Activated B cell treated with CpG ODN at 0.5 μM for 24 hours (primary cell): ENCODE measurements at regions of chr14 and their contacts with region 1.

Region 1: DNA sequence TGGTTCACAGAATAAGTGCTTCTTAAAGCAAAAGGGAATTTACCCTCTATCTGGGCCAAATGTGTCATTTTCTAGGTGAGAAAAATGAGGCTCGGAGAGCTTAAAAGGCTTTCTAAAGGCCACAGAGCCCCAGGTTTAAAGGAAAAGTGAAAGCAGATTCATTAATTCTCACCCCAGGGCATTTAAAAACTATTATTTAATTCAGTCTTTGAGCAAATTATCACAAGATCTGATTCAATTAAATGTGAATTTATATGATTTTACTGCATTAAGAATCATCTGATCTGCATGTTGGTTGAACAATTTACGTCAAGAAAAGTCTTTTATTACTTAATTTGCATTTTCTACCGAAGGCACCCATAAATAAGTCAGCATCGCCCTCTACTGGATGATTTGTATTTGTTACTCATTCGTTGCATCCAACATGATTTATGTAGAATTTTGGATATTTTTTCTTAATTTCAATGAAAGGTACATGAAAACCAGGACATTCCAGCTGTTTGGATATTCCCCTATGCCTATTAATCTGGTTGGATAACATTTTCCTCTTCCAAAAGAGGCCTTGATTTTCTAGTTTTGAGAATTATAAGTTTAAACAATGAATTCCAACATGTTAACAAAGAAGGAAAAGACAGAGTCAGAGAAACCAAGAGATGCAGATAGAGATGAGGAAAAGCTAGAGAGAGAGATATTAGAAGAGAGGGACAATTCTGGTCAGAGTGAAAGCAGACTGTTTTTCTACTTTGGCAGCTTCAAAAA is 19.1 kb upstream of the DHRS7 start:
- DNase-seq: no peak
- ATAC-seq: peak; percentile 56
- H3K4me3 Mint-ChIP-seq: peak overlapping the region; percentile 82
- H3K27ac Mint-ChIP-seq: peak overlapping the region; percentile 87
- H3K4me1 Mint-ChIP-seq: peaks cover 17% of the 10 kb centered on the region
- H3K27me3 Mint-ChIP-seq: no peaks in the 10 kb centered on the region
- CTCF ChIP-seq: peak; percentile 89

Region 2: DNA sequence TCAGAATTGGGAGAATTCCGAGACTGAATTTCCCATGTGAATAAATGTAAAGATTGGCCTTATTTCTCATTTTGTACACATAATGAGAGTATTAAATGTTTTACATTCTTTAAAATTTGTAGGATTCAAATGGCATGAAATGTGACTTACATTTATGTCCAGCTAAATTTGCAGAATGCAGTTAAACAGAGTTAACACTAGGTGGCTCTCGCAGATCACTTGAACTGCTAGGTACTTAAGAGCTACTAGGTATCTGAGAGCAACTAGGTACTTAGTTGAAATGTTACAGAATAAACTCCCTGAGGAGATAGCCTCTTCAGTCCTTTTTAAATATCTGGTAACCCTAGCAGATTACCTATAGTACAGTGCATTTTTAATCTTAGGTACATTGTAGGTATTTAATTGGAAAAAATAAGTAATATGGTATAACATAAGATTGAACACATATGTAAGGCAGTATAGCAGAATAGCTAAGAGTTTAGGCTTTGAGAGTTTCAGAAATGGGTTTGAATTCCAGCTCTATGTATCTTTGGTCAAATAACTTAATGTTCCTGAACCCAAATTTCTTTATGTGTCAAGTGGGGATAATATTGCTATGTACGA is 1683.0 kb before region 1 on chr14:
- CTCF ChIA-PET with region 1: no interaction called
- POLR2A ChIA-PET with region 1: no interaction called
- intact Hi-C with region 1: loop called (anchors 10 kb)
- DNase-seq: no peak
- ATAC-seq: peak; percentile 71
- H3K4me3 Mint-ChIP-seq: no peak overlapping the region
- H3K27ac Mint-ChIP-seq: no peak overlapping the region
- H3K4me1 Mint-ChIP-seq: no peaks in the 10 kb centered on the region
- H3K27me3 Mint-ChIP-seq: no peaks in the 10 kb centered on the region
- CTCF ChIP-seq: no peak

Region 3: GRCh38 chr14:59507063-59507780 is 677.1 kb before region 1 on chr14:
- CTCF ChIA-PET with region 1: interaction called, 7 read pairs
- POLR2A ChIA-PET with region 1: no interaction called
- intact Hi-C with region 1: loop called (anchors 1 kb)
- DNase-seq: no peak
- ATAC-seq: peak; percentile 70
- H3K4me3 Mint-ChIP-seq: no peak overlapping the region
- H3K27ac Mint-ChIP-seq: no peak overlapping the region
- H3K4me1 Mint-ChIP-seq: no peaks in the 10 kb centered on the region
- H3K27me3 Mint-ChIP-seq: peaks cover 3% of the 10 kb centered on the region
- CTCF ChIP-seq: no peak

Region 4: GRCh38 chr14:59964251-59965007 is 219.9 kb before region 1 on chr14:
- CTCF ChIA-PET with region 1: interaction called, 171 read pairs
- POLR2A ChIA-PET with region 1: no interaction called
- intact Hi-C with region 1: loop called (anchors 1 kb)
- DNase-seq: no peak
- ATAC-seq: peak; percentile 25
- H3K4me3 Mint-ChIP-seq: peak overlapping the region; percentile 86
- H3K27ac Mint-ChIP-seq: peak overlapping the region; percentile 93
- H3K4me1 Mint-ChIP-seq: peaks cover 14% of the 10 kb centered on the region
- H3K27me3 Mint-ChIP-seq: no peaks in the 10 kb centered on the region
- CTCF ChIP-seq: no peak

Region 5: DNA sequence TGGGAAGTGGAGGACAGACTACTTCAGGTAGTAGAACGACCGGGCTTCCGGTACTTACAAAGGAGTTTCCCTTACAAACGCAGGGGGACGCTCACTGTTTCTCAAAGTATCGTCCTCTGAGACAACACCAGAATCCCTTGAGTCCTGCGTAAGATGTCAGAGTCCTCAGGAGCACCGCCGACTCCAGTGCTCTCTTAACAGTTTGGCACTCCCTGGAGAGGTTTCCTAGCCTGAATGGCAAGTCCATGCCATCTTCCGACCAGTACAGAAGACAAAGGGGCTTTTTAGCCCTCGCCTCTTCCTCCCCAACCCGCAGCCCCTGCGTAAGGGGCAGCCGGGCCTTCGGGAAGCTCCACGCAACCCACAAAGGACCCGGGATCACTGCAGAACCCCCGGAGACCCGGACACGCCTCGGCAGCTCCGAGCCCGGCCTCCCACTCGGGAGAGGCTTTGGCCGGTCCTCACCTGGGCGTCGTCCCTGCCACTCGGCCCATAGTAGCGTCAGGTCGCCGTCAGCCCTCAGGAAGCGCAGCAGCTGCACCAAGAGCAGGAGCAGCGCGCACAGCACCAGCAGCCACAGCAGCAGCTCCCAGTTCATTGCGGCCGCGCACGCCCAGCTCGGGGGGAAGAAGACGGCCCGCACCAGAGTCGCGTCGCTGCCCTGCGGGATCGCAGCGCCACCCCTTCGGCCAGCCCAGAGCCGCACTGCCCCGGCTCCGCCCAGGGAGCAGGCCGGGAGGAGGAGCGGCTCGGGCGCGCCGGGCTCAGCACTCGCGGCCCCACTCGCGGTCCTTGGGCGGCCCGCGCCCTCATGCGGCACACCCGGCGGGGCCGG is 19.4 kb before region 1 on chr14 and contains the start of gene DHRS7:
- CTCF ChIA-PET with region 1: interaction called, 28 read pairs
- POLR2A ChIA-PET with region 1: interaction called, 22 read pairs
- intact Hi-C with region 1: loop called (anchors 1 kb)
- DNase-seq: peak; percentile 70
- ATAC-seq: peak; percentile 88
- H3K4me3 Mint-ChIP-seq: peak within 1 kb of the TSS; percentile 99
- H3K27ac Mint-ChIP-seq: peak within 1 kb of the TSS; percentile 99
- H3K4me1 Mint-ChIP-seq: peaks cover 39% of the 10 kb centered on the region
- H3K27me3 Mint-ChIP-seq: no peaks in the 10 kb centered on the region
- CTCF ChIP-seq: no peak
- total RNA-seq, gene DHRS7: 41.5 and 47.1 TPM in 2 replicates

Region 6: DNA sequence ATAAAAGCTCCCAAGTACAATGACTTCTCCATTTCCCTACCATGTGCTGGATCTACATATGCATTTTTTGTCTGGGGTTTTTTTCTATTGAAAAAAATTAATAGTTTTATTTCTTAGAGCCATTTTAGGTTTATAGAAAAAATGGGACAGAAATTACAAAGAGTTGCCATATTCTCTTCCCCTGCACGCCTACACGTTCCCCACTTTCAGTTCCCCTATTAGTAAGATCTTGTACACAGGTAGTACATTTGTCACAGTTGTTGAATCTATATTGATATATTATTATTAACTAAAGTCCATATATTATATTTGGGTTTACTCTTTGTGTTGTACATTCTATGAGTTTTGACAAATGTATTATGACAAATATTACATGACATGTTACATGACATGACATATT is 360.3 kb after region 1 on chr14:
- CTCF ChIA-PET with region 1: no interaction called
- POLR2A ChIA-PET with region 1: no interaction called
- intact Hi-C with region 1: no loop called
- DNase-seq: no peak
- ATAC-seq: no peak
- H3K4me3 Mint-ChIP-seq: no peak overlapping the region
- H3K27ac Mint-ChIP-seq: no peak overlapping the region
- H3K4me1 Mint-ChIP-seq: no peaks in the 10 kb centered on the region
- H3K27me3 Mint-ChIP-seq: peaks cover 10% of the 10 kb centered on the region
- CTCF ChIP-seq: no peak